Activated B cell treated with CpG ODN at 0.5 μM for 24 hours (primary cell): ENCODE measurements at regions of chr5 and their contacts with region 1.

Region 1: GRCh38 chr5:164504141-164504772 is 998.8 kb downstream of the MAT2B start:
- DNase-seq: no peak
- ATAC-seq: peak; percentile 40
- H3K4me3 Mint-ChIP-seq: no peak overlapping the region
- H3K27ac Mint-ChIP-seq: no peak overlapping the region
- H3K4me1 Mint-ChIP-seq: peaks cover 6% of the 10 kb centered on the region
- H3K27me3 Mint-ChIP-seq: peaks cover 3% of the 10 kb centered on the region
- CTCF ChIP-seq: peak; percentile 69

Region 2: DNA sequence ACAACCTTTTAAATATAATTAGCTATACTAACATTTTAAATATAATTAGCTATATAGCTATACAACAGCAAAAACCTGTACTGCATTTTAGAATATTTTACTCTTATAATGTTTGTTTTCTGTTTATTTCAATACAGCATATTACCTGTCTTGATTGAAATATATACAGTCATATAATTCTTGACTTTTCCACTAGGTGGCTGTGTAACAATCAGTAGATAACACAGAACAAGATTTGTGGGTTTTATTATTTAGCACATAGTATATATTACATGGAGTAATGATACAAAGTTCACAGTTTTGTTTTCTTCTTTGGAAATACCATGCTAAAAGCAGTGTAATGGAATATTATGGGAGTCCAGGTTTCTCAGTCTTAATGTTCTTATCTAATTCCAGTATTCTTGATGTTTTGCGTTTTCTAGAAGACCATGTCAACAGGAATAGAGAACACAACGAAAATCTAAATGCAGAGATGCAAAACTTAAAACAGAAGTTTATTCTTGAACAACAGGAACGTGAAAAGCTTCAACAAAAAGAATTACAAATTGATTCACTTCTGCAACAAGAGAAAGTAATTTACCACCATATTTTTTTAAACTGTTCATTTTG is 1030.5 kb before region 1 on chr5:
- CTCF ChIA-PET with region 1: interaction called, 3 read pairs
- POLR2A ChIA-PET with region 1: no interaction called
- intact Hi-C with region 1: loop called (anchors 2 kb)
- DNase-seq: no peak
- ATAC-seq: peak; percentile 65
- H3K4me3 Mint-ChIP-seq: no peak overlapping the region
- H3K27ac Mint-ChIP-seq: no peak overlapping the region
- H3K4me1 Mint-ChIP-seq: no peaks in the 10 kb centered on the region
- H3K27me3 Mint-ChIP-seq: no peaks in the 10 kb centered on the region
- CTCF ChIP-seq: no peak

Region 3: DNA sequence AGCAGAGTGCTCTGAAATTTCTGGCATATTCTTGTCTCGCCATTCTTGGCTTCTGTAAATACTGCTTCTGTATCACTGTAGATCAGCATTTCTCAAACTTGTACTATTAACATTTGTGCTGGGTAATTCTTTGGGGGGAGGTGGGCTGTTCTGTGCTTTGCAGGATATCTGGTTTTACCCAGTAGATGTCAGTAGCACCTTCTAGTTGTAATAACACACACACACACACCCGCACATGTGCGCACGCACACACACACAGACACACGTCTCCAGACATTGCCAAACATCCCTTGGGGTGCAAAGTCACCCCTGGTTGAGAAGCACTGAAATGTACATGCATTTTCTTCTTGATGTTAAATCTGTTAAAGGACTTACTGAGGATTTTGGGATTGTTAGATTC is 694.8 kb before region 1 on chr5:
- CTCF ChIA-PET with region 1: no interaction called
- POLR2A ChIA-PET with region 1: no interaction called
- intact Hi-C with region 1: loop called (anchors 1 kb)
- DNase-seq: no peak
- ATAC-seq: no peak
- H3K4me3 Mint-ChIP-seq: no peak overlapping the region
- H3K27ac Mint-ChIP-seq: no peak overlapping the region
- H3K4me1 Mint-ChIP-seq: peaks cover 17% of the 10 kb centered on the region
- H3K27me3 Mint-ChIP-seq: peaks cover 3% of the 10 kb centered on the region
- CTCF ChIP-seq: no peak

Region 4: DNA sequence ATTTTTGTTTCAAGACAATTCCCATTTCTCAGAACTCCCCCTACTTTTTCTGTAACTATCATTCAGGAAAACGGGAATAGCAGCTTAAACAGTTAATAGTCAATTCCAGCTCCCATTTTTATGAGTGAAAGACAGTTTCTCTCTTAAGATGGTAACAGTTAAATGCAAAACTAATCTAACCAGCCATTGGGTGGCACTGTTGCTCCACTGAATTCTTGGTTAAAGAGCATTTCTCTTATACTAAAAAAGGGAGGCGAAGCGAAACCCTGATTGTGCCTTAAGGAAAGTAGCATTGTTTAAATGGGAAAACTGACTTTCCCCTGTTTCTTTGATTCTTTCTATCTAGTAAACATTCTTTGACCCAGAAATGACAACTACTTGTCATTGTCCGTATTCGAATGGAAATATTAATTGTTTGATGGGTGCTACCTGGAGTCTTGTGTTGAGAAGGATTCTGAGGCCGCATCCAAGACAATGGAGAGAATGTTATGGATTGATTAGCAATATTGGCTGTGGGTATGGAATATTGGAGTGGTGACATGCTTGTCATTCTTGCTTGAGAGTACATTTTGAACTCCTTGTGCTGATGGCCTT is 491.1 kb before region 1 on chr5:
- CTCF ChIA-PET with region 1: interaction called, 13 read pairs
- POLR2A ChIA-PET with region 1: no interaction called
- intact Hi-C with region 1: loop called (anchors 1 kb)
- DNase-seq: no peak
- ATAC-seq: peak; percentile 50
- H3K4me3 Mint-ChIP-seq: no peak overlapping the region
- H3K27ac Mint-ChIP-seq: no peak overlapping the region
- H3K4me1 Mint-ChIP-seq: peaks cover 13% of the 10 kb centered on the region
- H3K27me3 Mint-ChIP-seq: no peaks in the 10 kb centered on the region
- CTCF ChIP-seq: no peak

Region 5: GRCh38 chr5:165209086-165209727 is 705.0 kb after region 1 on chr5:
- CTCF ChIA-PET with region 1: no interaction called
- POLR2A ChIA-PET with region 1: no interaction called
- intact Hi-C with region 1: loop called (anchors 1 kb)
- DNase-seq: no peak
- ATAC-seq: no peak
- H3K4me3 Mint-ChIP-seq: no peak overlapping the region
- H3K27ac Mint-ChIP-seq: no peak overlapping the region
- H3K4me1 Mint-ChIP-seq: no peaks in the 10 kb centered on the region
- H3K27me3 Mint-ChIP-seq: no peaks in the 10 kb centered on the region
- CTCF ChIP-seq: peak; percentile 32